ENCODE measurements at regions of chr5 and their contacts with region 1.

Region 1: GRCh38 chr5:35777358-35778087 is 79.2 kb upstream of the IL7R start:
- DNase-seq: peak; percentile 71 to 76 (median 75)
- H3K4me3 ChIP-seq: no peak overlapping the region
- H3K4me3 Mint-ChIP-seq: peak overlapping the region; percentile 75 to 86 (median 83)
- H3K27ac ChIP-seq: peak overlapping the region; percentile 54
- H3K27ac Mint-ChIP-seq: peak overlapping the region; percentile 81 to 98 (median 96)
- H3K4me1 ChIP-seq: peaks cover 73% of the 10 kb centered on the region
- H3K4me1 Mint-ChIP-seq: peaks cover 57 to 84% (median 69%) of the 10 kb centered on the region in 4 donors
- H3K27me3 ChIP-seq: no peaks in the 10 kb centered on the region
- H3K27me3 Mint-ChIP-seq: no peaks in the 10 kb centered on the region

Region 2: GRCh38 chr5:35672995-35673394 is 104.5 kb before region 1 on chr5:
- CTCF ChIA-PET with region 1: interaction called, 5 read pairs
- POLR2A ChIA-PET with region 1: interaction called, 6 read pairs
- intact Hi-C with region 1: loop called (anchors 5 kb)
- DNase-seq: peak; percentile 32 to 63 (median 54)
- H3K4me3 ChIP-seq: no peak overlapping the region
- H3K4me3 Mint-ChIP-seq: peak overlapping the region in 7 of 8 donors; percentile 31 to 76 (median 47)
- H3K27ac ChIP-seq: peak overlapping the region; percentile 7
- H3K27ac Mint-ChIP-seq: peak overlapping the region; percentile 68 to 92 (median 86)
- H3K4me1 ChIP-seq: peaks cover 58% of the 10 kb centered on the region
- H3K4me1 Mint-ChIP-seq: peaks cover 43 to 68% (median 54%) of the 10 kb centered on the region in 4 donors
- H3K27me3 ChIP-seq: no peaks in the 10 kb centered on the region
- H3K27me3 Mint-ChIP-seq: no peaks in the 10 kb centered on the region

Region 3: DNA sequence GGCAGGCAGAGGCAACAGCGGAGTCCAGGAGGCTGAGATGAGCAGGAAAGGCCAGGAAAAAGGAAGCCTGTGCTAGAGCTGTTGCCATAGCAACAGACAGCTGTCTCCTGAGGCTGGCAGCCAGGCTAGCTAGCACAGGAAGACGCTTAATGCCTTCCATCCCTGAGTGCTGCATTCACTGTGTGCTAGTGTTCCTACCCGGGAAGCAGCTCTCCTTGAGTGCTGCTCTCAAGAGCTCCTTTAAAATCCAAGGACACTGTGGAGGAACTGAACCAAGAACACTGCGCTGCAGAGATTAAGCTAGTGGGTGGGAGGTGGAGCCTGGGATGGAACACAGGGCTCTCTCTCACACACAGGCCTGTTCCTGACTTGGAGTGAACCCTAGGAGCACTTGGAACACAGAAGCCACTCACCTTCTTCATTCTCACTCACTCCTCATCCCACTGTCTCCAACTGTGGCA is 25.7 kb after region 1 on chr5:
- CTCF ChIA-PET with region 1: interaction called, 6 read pairs
- POLR2A ChIA-PET with region 1: interaction called, 103 read pairs
- intact Hi-C with region 1: no loop called
- DNase-seq: peak in 3 of 5 donors; percentile 40 to 60 (median 50)
- H3K4me3 ChIP-seq: peak overlapping the region in 1 of 2 donors; percentile 11
- H3K4me3 Mint-ChIP-seq: peak overlapping the region in 7 of 8 donors; percentile 58 to 80 (median 68)
- H3K27ac ChIP-seq: peak overlapping the region; percentile 46
- H3K27ac Mint-ChIP-seq: peak overlapping the region; percentile 66 to 93 (median 91)
- H3K4me1 ChIP-seq: peaks cover 67% of the 10 kb centered on the region
- H3K4me1 Mint-ChIP-seq: peaks cover 53 to 88% (median 71%) of the 10 kb centered on the region in 4 donors
- H3K27me3 ChIP-seq: no peaks in the 10 kb centered on the region
- H3K27me3 Mint-ChIP-seq: no peaks in the 10 kb centered on the region

Region 4: GRCh38 chr5:35822511-35822910 is 45.0 kb after region 1 on chr5:
- CTCF ChIA-PET with region 1: interaction called, 56 read pairs
- POLR2A ChIA-PET with region 1: interaction called, 233 read pairs
- intact Hi-C with region 1: no loop called
- DNase-seq: peak; percentile 59 to 70 (median 66)
- H3K4me3 ChIP-seq: peak overlapping the region in 1 of 2 donors; percentile 11
- H3K4me3 Mint-ChIP-seq: peak overlapping the region; percentile 27 to 95 (median 72)
- H3K27ac ChIP-seq: peak overlapping the region; percentile 46
- H3K27ac Mint-ChIP-seq: peak overlapping the region; percentile 74 to 98 (median 92)
- H3K4me1 ChIP-seq: peaks cover 99% of the 10 kb centered on the region
- H3K4me1 Mint-ChIP-seq: peaks cover 77 to 91% (median 84%) of the 10 kb centered on the region in 4 donors
- H3K27me3 ChIP-seq: no peaks in the 10 kb centered on the region
- H3K27me3 Mint-ChIP-seq: no peaks in the 10 kb centered on the region

Region 5: GRCh38 chr5:35852084-35852734 is 74.7 kb after region 1 on chr5:
- CTCF ChIA-PET with region 1: interaction called, 154 read pairs
- POLR2A ChIA-PET with region 1: interaction called, 1,081 read pairs
- intact Hi-C with region 1: no loop called
- DNase-seq: peak; percentile 60 to 81 (median 62)
- H3K4me3 ChIP-seq: peak overlapping the region; percentile 54 to 71
- H3K4me3 Mint-ChIP-seq: peak overlapping the region; percentile 87 to 99 (median 95)
- H3K27ac ChIP-seq: peak overlapping the region; percentile 97
- H3K27ac Mint-ChIP-seq: peak overlapping the region; percentile 94 to 100 (median 100)
- H3K4me1 ChIP-seq: peaks cover 75% of the 10 kb centered on the region
- H3K4me1 Mint-ChIP-seq: peaks cover 52 to 85% (median 70%) of the 10 kb centered on the region in 4 donors
- H3K27me3 ChIP-seq: no peaks in the 10 kb centered on the region
- H3K27me3 Mint-ChIP-seq: no peaks in the 10 kb centered on the region

Region 6: GRCh38 chr5:35876921-35877320 is 99.4 kb after region 1 on chr5:
- CTCF ChIA-PET with region 1: interaction called, 39 read pairs
- POLR2A ChIA-PET with region 1: interaction called, 451 read pairs
- intact Hi-C with region 1: no loop called
- DNase-seq: no peak
- H3K4me3 ChIP-seq: no peak overlapping the region
- H3K4me3 Mint-ChIP-seq: peak overlapping the region in 4 of 8 donors; percentile 3 to 58 (median 31)
- H3K27ac ChIP-seq: peak overlapping the region; percentile 16
- H3K27ac Mint-ChIP-seq: peak overlapping the region; percentile 53 to 89 (median 73)
- H3K4me1 ChIP-seq: peaks cover 57% of the 10 kb centered on the region
- H3K4me1 Mint-ChIP-seq: peaks cover 61 to 81% (median 71%) of the 10 kb centered on the region in 4 donors
- H3K27me3 ChIP-seq: no peaks in the 10 kb centered on the region
- H3K27me3 Mint-ChIP-seq: no peaks in the 10 kb centered on the region

Region 7: DNA sequence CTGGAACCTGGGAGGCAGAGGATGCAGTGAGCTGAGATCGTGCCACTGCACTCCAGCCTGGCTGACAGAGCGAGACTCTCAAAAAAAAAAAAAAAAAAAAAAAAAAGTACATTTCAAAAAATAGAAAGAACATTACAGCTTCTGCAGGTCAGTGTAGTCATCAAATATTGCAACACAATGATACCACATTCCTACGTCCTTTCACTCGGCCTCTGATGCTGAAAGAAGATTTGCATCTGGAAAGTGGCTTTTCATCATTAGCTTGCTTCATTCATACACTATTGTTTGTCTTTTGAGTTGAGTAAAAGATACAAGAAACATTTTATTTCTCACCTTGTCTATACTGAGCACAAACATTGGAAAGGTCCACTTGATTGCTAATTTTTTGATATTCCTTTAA is 1531.3 kb after region 1 on chr5:
- CTCF ChIA-PET with region 1: no interaction called
- POLR2A ChIA-PET with region 1: no interaction called
- intact Hi-C with region 1: no loop called
- DNase-seq: no peak
- H3K4me3 ChIP-seq: no peak overlapping the region
- H3K4me3 Mint-ChIP-seq: no peak overlapping the region
- H3K27ac ChIP-seq: no peak overlapping the region
- H3K27ac Mint-ChIP-seq: peak overlapping the region in 1 of 7 donors; percentile 17
- H3K4me1 ChIP-seq: no peaks in the 10 kb centered on the region
- H3K4me1 Mint-ChIP-seq: peaks cover 0 to 2% (median under 1%) of the 10 kb centered on the region in 4 donors
- H3K27me3 ChIP-seq: no peaks in the 10 kb centered on the region
- H3K27me3 Mint-ChIP-seq: no peaks in the 10 kb centered on the region